Activated B cell treated with CpG ODN at 0.5 μM for 24 hours (primary cell): ENCODE measurements at regions of chr4 and their contacts with region 1.

Region 1: GRCh38 chr4:55948726-55949474 is at the start of gene CEP135:
- DNase-seq: peak; percentile 94
- ATAC-seq: peak; percentile 79
- H3K4me3 Mint-ChIP-seq: peak within 1 kb of the TSS; percentile 94
- H3K27ac Mint-ChIP-seq: peak within 1 kb of the TSS; percentile 99
- H3K4me1 Mint-ChIP-seq: peaks cover 58% of the 10 kb centered on the region
- H3K27me3 Mint-ChIP-seq: no peaks in the 10 kb centered on the region
- CTCF ChIP-seq: peak; percentile 63
- total RNA-seq, gene CEP135: 24.7 and 30.2 TPM in 2 replicates

Region 2: GRCh38 chr4:55345980-55346850 is 602.7 kb before region 1 on chr4 and contains the start of gene SRD5A3:
- CTCF ChIA-PET with region 1: interaction called, 6 read pairs
- POLR2A ChIA-PET with region 1: no interaction called
- intact Hi-C with region 1: loop called (anchors 1 kb)
- DNase-seq: peak; percentile 87
- ATAC-seq: peak; percentile 89
- H3K4me3 Mint-ChIP-seq: peak within 1 kb of the TSS; percentile 93
- H3K27ac Mint-ChIP-seq: peak within 1 kb of the TSS; percentile 94
- H3K4me1 Mint-ChIP-seq: peaks cover 13% of the 10 kb centered on the region
- H3K27me3 Mint-ChIP-seq: peaks cover under 1% of the 10 kb centered on the region
- CTCF ChIP-seq: no peak
- total RNA-seq, gene SRD5A3: 4.5 and 5.7 TPM in 2 replicates

Region 3: GRCh38 chr4:55853484-55854046 is 95.3 kb before region 1 on chr4 and contains the start of gene EXOC1:
- CTCF ChIA-PET with region 1: no interaction called
- POLR2A ChIA-PET with region 1: interaction called, 16 read pairs
- intact Hi-C with region 1: loop called (anchors 1 kb)
- DNase-seq: peak; percentile 97
- ATAC-seq: peak; percentile 99
- H3K4me3 Mint-ChIP-seq: no peak within 1 kb of the TSS
- H3K27ac Mint-ChIP-seq: peak within 1 kb of the TSS; percentile 85
- H3K4me1 Mint-ChIP-seq: peaks cover 15% of the 10 kb centered on the region
- H3K27me3 Mint-ChIP-seq: peaks cover 8% of the 10 kb centered on the region
- CTCF ChIP-seq: no peak
- total RNA-seq, gene EXOC1: 28.7 and 34.8 TPM in 2 replicates

Region 4: DNA sequence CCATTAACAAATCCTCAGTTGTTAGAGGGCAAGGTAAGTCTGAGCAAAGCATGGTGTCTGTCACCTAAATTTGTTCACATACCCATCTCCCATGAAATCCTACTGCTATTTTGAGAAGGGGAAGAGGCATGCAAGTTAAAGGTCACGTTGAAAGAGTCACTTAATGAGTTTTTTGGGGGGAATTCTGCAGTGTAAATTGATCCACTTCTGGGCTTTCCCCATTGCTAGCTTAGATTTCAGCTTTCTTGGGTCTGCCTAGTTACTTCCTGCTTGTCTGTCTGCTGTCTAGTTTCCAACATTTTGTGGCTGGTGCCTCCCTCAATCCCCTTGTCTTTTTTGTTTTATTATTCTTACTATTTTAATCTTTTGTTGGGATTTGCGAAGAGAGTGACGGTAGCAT is 31.8 kb after region 1 on chr4:
- CTCF ChIA-PET with region 1: interaction called, 14 read pairs
- POLR2A ChIA-PET with region 1: interaction called, 21 read pairs
- intact Hi-C with region 1: loop called (anchors 1 kb)
- DNase-seq: no peak
- ATAC-seq: peak; percentile 45
- H3K4me3 Mint-ChIP-seq: peak overlapping the region; percentile 72
- H3K27ac Mint-ChIP-seq: peak overlapping the region; percentile 85
- H3K4me1 Mint-ChIP-seq: peaks cover 37% of the 10 kb centered on the region
- H3K27me3 Mint-ChIP-seq: no peaks in the 10 kb centered on the region
- CTCF ChIP-seq: no peak

Region 5: DNA sequence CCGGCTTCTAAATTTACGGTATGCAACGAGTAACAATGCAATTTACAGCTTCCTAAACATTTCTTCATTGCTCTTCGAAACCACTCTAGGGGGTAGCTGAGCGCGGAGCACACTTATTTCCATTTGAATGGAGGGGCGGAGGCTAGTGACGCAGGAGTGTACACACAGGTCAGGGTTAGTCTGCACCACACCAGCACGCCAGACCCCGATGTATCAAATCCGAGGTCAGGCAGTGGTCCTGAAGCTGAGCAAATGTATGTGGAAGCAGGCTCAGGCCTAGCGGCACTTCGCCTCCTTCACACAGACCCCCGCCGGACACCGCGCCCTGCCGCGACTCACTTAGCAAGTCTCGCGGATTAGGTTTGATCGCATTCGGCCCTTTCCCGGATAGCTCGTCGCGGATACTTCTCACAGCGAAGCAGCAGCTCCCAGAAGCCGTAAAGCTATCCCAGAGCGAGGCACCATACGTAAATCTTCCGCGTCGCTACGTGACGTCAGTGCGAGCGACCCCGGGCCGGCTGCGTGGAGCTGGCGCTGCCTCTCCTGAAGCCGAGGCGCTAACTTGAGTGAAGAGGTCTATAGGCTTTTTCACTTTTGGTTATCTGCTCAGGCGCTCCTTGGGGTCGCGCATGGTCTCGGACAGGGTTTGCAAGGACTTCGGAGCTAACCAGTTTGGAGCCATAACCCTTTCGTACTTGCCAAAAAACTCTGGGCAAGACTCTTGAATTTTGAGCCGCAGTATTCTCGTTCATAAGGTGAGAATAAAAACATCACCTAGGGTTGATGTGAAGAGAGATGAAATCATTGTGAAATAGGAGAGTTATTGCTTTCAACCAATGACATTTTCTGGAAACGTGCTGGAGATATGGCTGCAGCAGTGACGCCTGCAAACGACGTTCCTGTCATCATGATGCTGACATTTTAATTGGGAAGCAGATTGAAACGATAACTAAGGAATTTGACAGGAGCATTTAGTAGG is 438.4 kb after region 1 on chr4 and contains the start of gene AASDH:
- CTCF ChIA-PET with region 1: interaction called, 5 read pairs
- POLR2A ChIA-PET with region 1: interaction called, 17 read pairs
- intact Hi-C with region 1: loop called (anchors 1 kb)
- DNase-seq: peak; percentile 96
- ATAC-seq: peak; percentile 90
- H3K4me3 Mint-ChIP-seq: peak within 1 kb of the TSS; percentile 93
- H3K27ac Mint-ChIP-seq: peak within 1 kb of the TSS; percentile 99
- H3K4me1 Mint-ChIP-seq: peaks cover 27% of the 10 kb centered on the region
- H3K27me3 Mint-ChIP-seq: no peaks in the 10 kb centered on the region
- CTCF ChIP-seq: no peak
- total RNA-seq, gene AASDH: 12.8 and 14.2 TPM in 2 replicates

Region 6: DNA sequence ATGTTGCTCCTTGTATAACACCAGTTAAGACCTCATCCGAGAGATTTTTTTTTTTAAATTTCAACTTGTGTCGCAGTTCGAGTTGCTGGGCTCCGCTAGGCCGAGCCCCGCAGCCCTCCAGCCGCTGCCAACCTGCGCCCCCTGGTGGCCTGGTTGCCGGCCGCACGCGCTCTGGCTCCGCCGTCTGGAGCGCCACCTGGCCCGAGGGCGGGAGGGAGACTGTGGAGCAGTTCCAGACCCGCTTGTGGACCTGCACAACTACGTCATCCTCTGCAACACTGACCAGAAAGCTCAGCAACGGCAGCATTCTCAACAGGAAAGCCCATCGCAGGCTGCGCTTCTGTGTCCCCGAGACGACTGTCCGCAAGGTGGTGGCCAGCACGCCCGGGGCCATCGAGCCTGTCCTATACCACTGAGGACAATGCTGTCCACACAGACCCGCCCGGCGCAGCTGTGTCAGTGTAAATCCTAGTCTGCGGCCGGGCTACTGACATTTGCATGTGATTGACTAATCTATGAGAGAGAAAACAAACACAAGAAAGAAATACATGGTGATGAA is 595.8 kb after region 1 on chr4:
- CTCF ChIA-PET with region 1: no interaction called
- POLR2A ChIA-PET with region 1: no interaction called
- intact Hi-C with region 1: loop called (anchors 1 kb)
- DNase-seq: peak; percentile 89
- ATAC-seq: peak; percentile 99
- H3K4me3 Mint-ChIP-seq: peak overlapping the region; percentile 71
- H3K27ac Mint-ChIP-seq: no peak overlapping the region
- H3K4me1 Mint-ChIP-seq: peaks cover 10% of the 10 kb centered on the region
- H3K27me3 Mint-ChIP-seq: peaks cover 14% of the 10 kb centered on the region
- CTCF ChIP-seq: peak; percentile 93